WTC11 (cell line): ENCODE measurements at regions of chr6 and their contacts with region 1.

Region 1: DNA sequence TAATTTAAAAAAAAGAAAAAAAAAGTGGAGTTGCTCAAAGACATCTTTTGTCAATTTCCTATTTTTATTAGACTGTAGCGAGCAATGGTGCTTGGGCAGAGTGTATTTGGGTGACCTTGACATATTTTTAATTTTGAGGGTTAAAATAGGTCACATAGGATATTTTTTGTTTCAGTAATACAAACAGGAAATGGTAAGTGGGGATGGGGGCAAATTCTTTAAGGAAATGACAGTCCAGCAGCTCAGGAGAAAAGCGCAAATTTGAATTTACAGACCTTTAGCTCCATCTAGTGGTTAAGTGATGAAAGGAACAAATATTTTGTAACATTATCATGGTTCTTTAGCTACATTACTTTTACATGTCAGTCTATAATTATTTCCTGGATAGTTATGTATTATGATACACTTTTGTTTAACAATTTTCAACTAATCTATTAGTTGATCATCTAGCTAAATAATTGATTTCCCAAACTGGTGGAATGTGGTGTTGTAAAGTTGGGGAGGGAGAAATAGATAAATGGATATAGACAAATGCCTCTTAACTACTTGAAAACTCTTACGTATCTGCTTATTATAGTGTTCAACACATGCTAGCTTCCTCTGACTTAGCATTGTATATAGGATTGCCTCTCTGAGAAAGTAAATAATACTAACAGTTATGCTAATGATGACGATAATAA is 10.0 kb downstream of the CITED2 start:
- DNase-seq: no peak
- ATAC-seq: no peak
- H3K4me3 Mint-ChIP-seq: no peak overlapping the region
- H3K27ac Mint-ChIP-seq: 0 out of 2 replicates have a peak overlapping the region, but pooled peaks have one; percentile 16
- H3K4me1 Mint-ChIP-seq: peaks cover 47% of the 10 kb centered on the region
- H3K27me3 Mint-ChIP-seq: no peaks in the 10 kb centered on the region
- CTCF ChIP-seq: peak; percentile 49; the same call in 1 of the 2 replicates

Region 2: DNA sequence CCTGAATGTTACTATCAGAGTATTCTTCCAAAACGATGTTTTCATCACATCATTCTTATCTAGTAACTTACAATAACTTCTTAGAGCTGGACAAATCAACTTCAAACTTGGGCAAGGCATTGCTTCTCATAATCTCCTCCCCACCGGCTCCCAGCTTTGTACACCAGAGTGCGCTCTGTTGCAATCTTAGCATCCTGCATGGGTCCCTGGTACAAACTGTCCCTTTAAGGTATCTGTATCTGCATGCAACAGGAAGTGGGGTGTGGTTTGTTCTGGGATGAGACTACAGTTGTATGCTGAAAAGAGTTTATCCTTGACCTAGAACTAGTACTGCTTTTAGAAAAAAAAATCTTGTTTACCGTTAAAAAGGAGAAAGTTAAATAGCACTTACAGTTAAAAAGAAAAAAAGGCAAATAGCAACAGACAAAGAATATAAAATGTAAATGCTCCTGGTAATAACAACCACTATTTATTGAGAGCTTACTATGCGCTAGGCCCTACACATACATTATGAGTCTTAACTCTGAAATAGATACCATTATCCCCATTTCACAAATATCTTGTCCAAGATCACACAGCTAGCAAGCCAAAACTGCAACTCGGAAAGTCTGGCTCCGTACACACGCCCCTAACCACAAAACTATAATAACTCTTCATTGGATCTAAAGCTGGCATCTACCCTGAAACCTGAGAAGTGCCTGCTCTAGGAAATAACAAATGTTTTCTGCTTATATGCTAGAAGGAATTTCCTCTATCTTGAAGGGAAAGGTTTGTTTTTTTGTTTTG is 239.4 kb before region 1 on chr6:
- CTCF ChIA-PET with region 1: interaction called, 13 read pairs
- POLR2A ChIA-PET with region 1: no interaction called
- DNase-seq: peak; percentile 38
- ATAC-seq: peak; percentile 99
- H3K4me3 Mint-ChIP-seq: no peak overlapping the region
- H3K27ac Mint-ChIP-seq: no peak overlapping the region
- H3K4me1 Mint-ChIP-seq: peaks cover 6% of the 10 kb centered on the region
- H3K27me3 Mint-ChIP-seq: peaks cover 2% of the 10 kb centered on the region; the same call in 1 of the 2 replicates
- CTCF ChIP-seq: no peak

Region 3: DNA sequence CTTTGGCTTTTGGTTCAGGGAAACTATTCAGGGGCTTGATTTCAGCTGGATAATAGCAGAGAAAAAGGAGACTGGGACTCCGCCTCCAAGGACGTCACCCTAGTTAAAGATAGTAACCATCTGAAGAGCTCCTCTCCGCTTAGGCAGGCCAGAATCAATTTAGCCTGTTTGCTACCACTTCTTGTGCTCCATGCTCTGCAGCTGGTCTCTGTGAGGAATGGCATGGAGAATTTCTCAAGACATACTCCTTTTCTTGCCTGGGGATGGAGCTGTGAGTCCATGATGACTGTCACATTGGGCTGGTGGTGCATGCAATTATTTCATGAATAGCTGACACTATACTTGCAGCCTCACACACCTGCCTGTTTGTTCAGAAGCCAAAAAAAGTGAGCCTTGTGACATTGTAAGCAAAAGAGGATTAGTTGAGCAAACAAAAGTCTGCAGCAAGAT is 134.0 kb before region 1 on chr6:
- CTCF ChIA-PET with region 1: interaction called, 17 read pairs
- POLR2A ChIA-PET with region 1: no interaction called
- DNase-seq: no peak
- ATAC-seq: peak; percentile 82
- H3K4me3 Mint-ChIP-seq: no peak overlapping the region
- H3K27ac Mint-ChIP-seq: no peak overlapping the region; the same call in 1 of the 2 replicates
- H3K4me1 Mint-ChIP-seq: peaks cover 6% of the 10 kb centered on the region; the same call in 1 of the 2 replicates
- H3K27me3 Mint-ChIP-seq: peaks cover 6% of the 10 kb centered on the region
- CTCF ChIP-seq: no peak

Region 4: GRCh38 chr6:139271056-139271455 is 93.4 kb before region 1 on chr6:
- CTCF ChIA-PET with region 1: no interaction called
- POLR2A ChIA-PET with region 1: no interaction called
- DNase-seq: no peak
- ATAC-seq: no peak
- H3K4me3 Mint-ChIP-seq: no peak overlapping the region
- H3K27ac Mint-ChIP-seq: no peak overlapping the region
- H3K4me1 Mint-ChIP-seq: no peaks in the 10 kb centered on the region
- H3K27me3 Mint-ChIP-seq: no peaks in the 10 kb centered on the region
- CTCF ChIP-seq: no peak

Region 5: GRCh38 chr6:139313784-139314545 is 50.5 kb before region 1 on chr6:
- CTCF ChIA-PET with region 1: interaction called, 12 read pairs
- POLR2A ChIA-PET with region 1: no interaction called
- DNase-seq: peak; percentile 50
- ATAC-seq: peak; percentile 90
- H3K4me3 Mint-ChIP-seq: no peak overlapping the region
- H3K27ac Mint-ChIP-seq: peak overlapping the region; percentile 99
- H3K4me1 Mint-ChIP-seq: peaks cover 65% of the 10 kb centered on the region
- H3K27me3 Mint-ChIP-seq: no peaks in the 10 kb centered on the region
- CTCF ChIP-seq: no peak

Region 6: GRCh38 chr6:139422105-139423036 is 57.9 kb after region 1 on chr6:
- CTCF ChIA-PET with region 1: no interaction called
- POLR2A ChIA-PET with region 1: no interaction called
- DNase-seq: no peak
- ATAC-seq: no peak
- H3K4me3 Mint-ChIP-seq: no peak overlapping the region
- H3K27ac Mint-ChIP-seq: no peak overlapping the region
- H3K4me1 Mint-ChIP-seq: peaks cover 12% of the 10 kb centered on the region
- H3K27me3 Mint-ChIP-seq: no peaks in the 10 kb centered on the region
- CTCF ChIP-seq: no peak